Activated T-helper 2 cell treated with anti-CD3 and anti-CD28 coated beads, Interferon-gamma antibody, Interleukin-2, Interleukin-4, amounts not matched to agents 10 μg/mL and 5 μg/mL and 100 μg/mL, durations not matched to agents 14 hours and 24 hours and 36 hours (primary cell): ENCODE measurements at regions of chr18 and their contacts with region 1.

Region 1: GRCh38 chr18:3585656-3586509 is 135.9 kb downstream of the TGIF1 start:
- DNase-seq: peak; percentile 57
- H3K4me3 Mint-ChIP-seq: no peak overlapping the region
- H3K27ac Mint-ChIP-seq: peak overlapping the region; percentile 80
- H3K4me1 Mint-ChIP-seq: peaks cover 36% of the 10 kb centered on the region
- H3K27me3 Mint-ChIP-seq: no peaks in the 10 kb centered on the region

Region 2: DNA sequence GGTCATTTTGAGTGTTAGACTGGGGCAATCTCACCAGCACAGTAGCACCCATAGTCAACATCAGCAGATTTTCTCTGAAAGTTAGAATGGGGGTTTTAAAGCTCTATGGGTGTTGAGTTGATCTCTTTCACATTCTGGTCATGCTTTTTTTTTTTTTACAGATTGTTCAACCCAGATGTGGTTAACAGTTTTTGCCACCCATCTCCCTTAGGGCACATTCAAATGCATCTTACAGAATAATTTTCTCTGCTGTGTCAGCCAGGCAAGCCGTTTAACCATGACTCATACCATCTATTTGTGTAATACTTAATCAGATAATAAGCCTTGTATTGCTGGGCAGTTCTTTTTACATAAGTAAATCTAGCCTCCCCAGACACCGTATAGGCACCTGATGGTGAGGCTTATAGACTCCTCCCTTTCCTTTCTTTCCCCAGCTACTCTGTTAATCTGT is 73.9 kb before region 1 on chr18:
- intact Hi-C with region 1: no loop called
- DNase-seq: no peak
- H3K4me3 Mint-ChIP-seq: no peak overlapping the region
- H3K27ac Mint-ChIP-seq: no peak overlapping the region
- H3K4me1 Mint-ChIP-seq: peaks cover 2% of the 10 kb centered on the region
- H3K27me3 Mint-ChIP-seq: no peaks in the 10 kb centered on the region

Region 3: GRCh38 chr18:3525870-3526420 is 59.9 kb before region 1 on chr18:
- intact Hi-C with region 1: loop called (anchors 10 kb)
- DNase-seq: peak; percentile 45
- H3K4me3 Mint-ChIP-seq: no peak overlapping the region
- H3K27ac Mint-ChIP-seq: peak overlapping the region; percentile 39
- H3K4me1 Mint-ChIP-seq: peaks cover 16% of the 10 kb centered on the region
- H3K27me3 Mint-ChIP-seq: peaks cover 6% of the 10 kb centered on the region

Region 4: DNA sequence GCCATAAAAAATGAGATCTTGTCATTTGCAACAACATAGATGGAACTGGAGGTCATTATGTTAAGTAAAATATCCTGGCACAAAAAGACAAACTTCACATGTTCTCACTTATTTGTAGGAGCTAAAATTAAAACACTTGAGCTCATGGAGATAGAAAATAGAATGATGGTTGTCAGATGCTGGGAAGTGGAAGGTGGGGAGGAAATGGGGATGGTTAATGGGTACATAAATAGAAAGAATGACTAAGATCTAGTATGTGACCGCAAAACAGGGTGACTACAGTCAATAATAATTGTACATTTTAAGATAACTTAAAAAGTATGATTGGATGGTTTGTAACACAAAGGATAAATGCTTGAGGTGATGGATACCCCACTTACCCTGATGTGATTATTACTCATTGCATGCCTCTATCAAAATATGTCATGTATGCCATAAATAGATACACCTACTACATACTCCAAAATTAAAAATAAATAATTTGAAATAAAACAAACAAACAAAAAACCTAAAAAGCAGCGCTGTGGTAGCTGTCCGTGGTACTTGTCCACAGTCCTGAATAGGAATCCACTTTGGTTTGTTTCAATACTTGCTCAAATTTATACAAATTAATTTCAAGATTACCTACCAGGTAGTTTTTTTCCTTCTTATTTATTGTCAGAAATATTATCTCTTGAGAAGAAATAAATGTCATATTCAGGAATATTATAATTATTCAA is 644.7 kb after region 1 on chr18:
- intact Hi-C with region 1: no loop called
- DNase-seq: no peak
- H3K4me3 Mint-ChIP-seq: no peak overlapping the region
- H3K27ac Mint-ChIP-seq: no peak overlapping the region
- H3K4me1 Mint-ChIP-seq: no peaks in the 10 kb centered on the region
- H3K27me3 Mint-ChIP-seq: no peaks in the 10 kb centered on the region